HepG2 (cell line): ENCODE measurements at regions of chr4 and their contacts with region 1.

Region 1: DNA sequence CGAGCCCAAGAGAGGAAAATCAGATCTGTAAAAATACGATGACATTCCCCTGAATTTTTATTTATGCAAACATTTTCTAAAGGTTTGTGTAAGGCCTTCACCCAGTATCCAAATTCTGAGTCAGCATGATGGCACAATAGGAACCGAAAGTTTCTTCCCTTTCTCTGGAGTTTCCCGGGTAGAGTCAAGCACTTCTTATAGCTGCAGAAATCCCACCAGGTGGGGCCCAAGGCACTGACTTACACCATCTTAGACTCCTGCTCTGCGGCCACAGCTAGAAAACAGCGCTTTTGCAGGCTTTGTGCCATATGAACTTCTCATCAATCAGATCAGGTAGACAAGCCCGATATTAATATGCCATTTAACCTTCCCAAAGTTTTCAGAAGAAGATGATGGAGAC is 13.4 kb downstream of the LEF1 start:
- DNase-seq: no peak
- ATAC-seq: peak; percentile 23; the same call in 1 of the 3 replicates
- H3K4me3 ChIP-seq: no peak overlapping the region
- H3K27ac ChIP-seq: no peak overlapping the region
- H3K4me1 ChIP-seq: no peaks in the 10 kb centered on the region
- H3K27me3 ChIP-seq: no peaks in the 10 kb centered on the region
- CTCF ChIP-seq: no peak
- EP300 ChIP-seq: no peak
- POLR2A ChIP-seq: no peak
- RAD21 ChIP-seq: no peak

Region 2: GRCh38 chr4:108570993-108571569 is 415.7 kb after region 1 on chr4:
- CTCF ChIA-PET with region 1: no interaction called
- POLR2A ChIA-PET with region 1: no interaction called
- in situ Hi-C with region 1: no loop called
- intact Hi-C with region 1: loop called (anchors 1 kb)
- DNase-seq: no peak
- ATAC-seq: peak; percentile 54; the same call in 2 of the 3 replicates
- H3K4me3 ChIP-seq: no peak overlapping the region
- H3K27ac ChIP-seq: no peak overlapping the region
- H3K4me1 ChIP-seq: no peaks in the 10 kb centered on the region
- H3K27me3 ChIP-seq: no peaks in the 10 kb centered on the region
- CTCF ChIP-seq: no peak
- EP300 ChIP-seq: no peak
- POLR2A ChIP-seq: no peak
- RAD21 ChIP-seq: no peak